ENCODE measurements at regions of chr16 and their contacts with region 1.

Region 1: GRCh38 chr16:3059000-3059722 is 6.3 kb upstream of the IL32 start:
- DNase-seq: peak; percentile 97
- H3K4me3 Mint-ChIP-seq: peak overlapping the region; percentile 96
- H3K27ac Mint-ChIP-seq: peak overlapping the region; percentile 55
- H3K4me1 Mint-ChIP-seq: peaks cover 2% of the 10 kb centered on the region
- H3K27me3 Mint-ChIP-seq: no peaks in the 10 kb centered on the region
- CTCF ChIP-seq: peak; percentile 97

Region 2: GRCh38 chr16:3023669-3024478 is 35.3 kb before region 1 on chr16 and contains the starts of genes HCFC1R1 and THOC6:
- CTCF ChIA-PET with region 1: interaction called, 12 read pairs
- intact Hi-C with region 1: no loop called
- DNase-seq: peak; percentile 97
- H3K4me3 Mint-ChIP-seq: peak within 1 kb of the TSS; percentile 80
- H3K27ac Mint-ChIP-seq: peak within 1 kb of the TSS; percentile 89
- H3K4me1 Mint-ChIP-seq: peaks cover 30% of the 10 kb centered on the region
- H3K27me3 Mint-ChIP-seq: no peaks in the 10 kb centered on the region
- CTCF ChIP-seq: no peak
- total RNA-seq, gene HCFC1R1: 61.1 and 75.4 TPM in 2 replicates
- total RNA-seq, gene THOC6: 50.8 and 54.4 TPM in 2 replicates

Region 3: DNA sequence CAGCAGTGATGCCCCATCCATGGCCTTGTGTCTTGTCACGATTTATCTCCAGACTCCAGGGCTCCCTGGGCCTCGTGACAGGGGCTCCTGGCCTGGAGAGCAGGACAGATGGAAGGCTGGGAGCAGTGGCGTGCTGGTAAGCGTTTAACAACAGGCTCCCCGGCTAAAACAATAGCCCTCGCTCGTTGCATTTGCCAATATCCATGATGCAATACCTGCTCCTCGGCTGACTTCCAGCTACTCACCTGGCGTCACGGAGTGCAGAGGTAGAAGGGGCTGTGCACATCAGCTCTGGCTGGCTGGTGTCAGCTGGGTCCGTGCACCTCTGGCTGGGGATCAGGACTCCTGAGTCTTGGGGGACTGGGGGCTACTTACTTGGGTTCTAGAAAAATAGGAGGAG is 20.9 kb before region 1 on chr16:
- CTCF ChIA-PET with region 1: interaction called, 10 read pairs
- intact Hi-C with region 1: no loop called
- DNase-seq: peak; percentile 79
- H3K4me3 Mint-ChIP-seq: peak overlapping the region; percentile 74
- H3K27ac Mint-ChIP-seq: peak overlapping the region; percentile 35
- H3K4me1 Mint-ChIP-seq: peaks cover 9% of the 10 kb centered on the region
- H3K27me3 Mint-ChIP-seq: peaks cover under 1% of the 10 kb centered on the region
- CTCF ChIP-seq: no peak

Region 4: GRCh38 chr16:3087243-3088235 is 28.4 kb after region 1 on chr16:
- CTCF ChIA-PET with region 1: no interaction called
- intact Hi-C with region 1: no loop called
- DNase-seq: no peak
- H3K4me3 Mint-ChIP-seq: no peak overlapping the region
- H3K27ac Mint-ChIP-seq: no peak overlapping the region
- H3K4me1 Mint-ChIP-seq: no peaks in the 10 kb centered on the region
- H3K27me3 Mint-ChIP-seq: peaks cover 56% of the 10 kb centered on the region
- CTCF ChIP-seq: no peak

Measured in Calu3 (cell line).